Activated CD4-positive, alpha-beta T cell treated with anti-CD3 and anti-CD28 coated beads, Interleukin-2, amount 10 ng/mL, durations not matched to agents 24 days and 14 days (primary cell): ENCODE measurements at regions of chr4 and their contacts with region 1.

Region 1: DNA sequence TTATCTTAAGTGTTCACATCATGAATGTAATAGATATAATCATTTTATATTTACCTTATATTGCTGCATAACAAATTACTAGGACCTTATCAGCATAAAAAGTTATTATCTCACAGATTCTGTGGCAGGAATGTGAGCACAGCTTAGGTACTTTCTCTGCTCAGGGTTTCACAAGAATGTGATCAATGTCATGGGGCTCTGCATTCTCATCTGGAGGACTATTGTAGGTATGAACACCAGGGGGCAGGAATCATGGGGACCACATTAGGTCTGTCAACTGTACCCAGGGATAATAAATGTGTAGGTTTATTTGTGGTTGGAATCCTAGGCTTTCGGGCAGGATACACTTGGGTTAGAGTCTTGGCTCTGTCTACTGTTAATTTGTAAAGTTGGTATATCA is 519.2 kb downstream of the ARAP2 start:
- DNase-seq: no peak
- H3K4me3 Mint-ChIP-seq: no peak overlapping the region
- H3K27ac Mint-ChIP-seq: no peak overlapping the region
- H3K4me1 Mint-ChIP-seq: no peaks in the 10 kb centered on the region
- H3K27me3 Mint-ChIP-seq: no peaks in the 10 kb centered on the region

Region 2: GRCh38 chr4:34800953-34801352 is 924.2 kb before region 1 on chr4:
- intact Hi-C with region 1: no loop called
- DNase-seq: no peak
- H3K4me3 Mint-ChIP-seq: no peak overlapping the region
- H3K27ac Mint-ChIP-seq: no peak overlapping the region
- H3K4me1 Mint-ChIP-seq: no peaks in the 10 kb centered on the region
- H3K27me3 Mint-ChIP-seq: no peaks in the 10 kb centered on the region

Region 3: DNA sequence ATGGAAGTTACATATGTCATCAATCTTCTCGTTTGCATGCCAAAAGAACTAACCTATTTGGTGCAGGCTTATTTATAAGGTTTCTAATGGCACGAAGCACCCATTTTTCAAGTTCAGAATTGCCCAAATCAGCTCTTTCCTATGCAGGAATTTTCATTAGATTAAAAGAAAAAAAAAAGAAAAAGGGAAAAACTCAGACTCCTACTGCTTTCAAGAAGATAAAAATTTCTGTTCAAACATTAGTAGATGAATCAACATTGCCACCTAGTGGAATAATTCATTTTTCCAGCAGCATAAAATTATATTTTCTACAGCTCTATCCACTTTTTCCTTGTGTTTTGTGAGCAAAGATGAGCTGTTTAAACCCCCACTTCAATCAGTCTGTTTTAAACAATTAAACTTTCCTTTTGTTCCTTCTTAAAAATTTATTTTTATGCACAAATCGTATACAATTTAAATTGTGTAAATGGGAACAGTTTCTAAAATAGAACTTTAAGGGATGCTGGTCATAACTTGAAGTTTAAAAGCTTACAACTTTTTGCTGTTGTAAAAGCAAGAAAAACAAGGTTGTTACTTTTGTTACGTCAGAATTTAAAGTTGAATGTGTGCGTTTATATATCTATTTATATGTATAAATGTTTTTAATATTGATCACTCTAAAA is 209.3 kb after region 1 on chr4:
- intact Hi-C with region 1: loop called (anchors 10 kb)
- DNase-seq: no peak
- H3K4me3 Mint-ChIP-seq: no peak overlapping the region
- H3K27ac Mint-ChIP-seq: no peak overlapping the region
- H3K4me1 Mint-ChIP-seq: no peaks in the 10 kb centered on the region
- H3K27me3 Mint-ChIP-seq: peaks cover 5% of the 10 kb centered on the region